CD8-positive, alpha-beta T cell (primary cell): ENCODE measurements at regions of chr2 and their contacts with region 1.

Region 1: DNA sequence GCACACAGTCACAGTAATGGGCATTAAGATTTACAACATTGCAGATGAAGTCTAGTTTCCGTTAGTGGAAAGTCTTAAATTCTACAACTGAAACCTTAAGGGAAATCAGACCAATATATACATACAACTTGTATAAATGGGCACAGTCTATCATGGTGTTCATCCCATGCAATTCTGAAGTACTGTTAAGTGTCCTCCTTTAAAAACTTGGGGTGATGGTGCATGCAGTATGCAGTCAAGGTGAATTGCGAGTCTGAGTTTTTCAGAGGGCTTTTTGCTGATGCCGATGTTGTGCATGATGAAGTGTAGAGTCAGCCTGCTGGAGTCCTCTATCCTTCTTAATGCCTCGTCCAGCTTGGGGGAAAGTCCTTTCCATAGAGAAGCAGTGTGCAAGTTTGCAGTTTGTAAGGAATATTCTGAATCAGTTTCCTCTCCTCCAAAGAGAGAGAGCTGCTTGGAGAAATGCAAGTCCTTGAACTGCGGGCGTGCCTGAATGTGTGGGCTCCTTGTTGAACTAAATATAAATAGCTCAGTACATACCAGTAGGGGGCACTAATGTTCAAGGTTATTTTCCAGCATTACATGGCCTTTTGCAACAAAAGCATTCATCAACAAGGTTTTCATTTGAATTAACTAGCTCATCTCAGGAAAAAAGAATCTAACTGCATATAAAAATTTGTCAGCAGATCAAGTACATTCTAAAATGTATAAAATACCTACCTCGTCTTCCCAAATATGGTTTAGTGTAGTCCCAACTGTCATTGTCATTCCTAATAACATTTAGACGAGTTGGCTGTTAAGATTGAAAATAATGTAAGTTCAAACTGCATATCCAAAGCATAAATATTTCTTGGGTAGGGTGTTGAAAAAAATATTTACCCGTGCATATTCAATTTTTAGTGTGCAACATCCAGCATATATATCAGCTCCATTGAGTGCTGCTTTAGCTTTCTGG is 21.3 kb downstream of the HNRNPLL start:
- DNase-seq: peak in 6 of 9 experiments; percentile 33 to 85 (median 63)
- ATAC-seq: peak; percentile 93
- H3K4me3 ChIP-seq: no peak overlapping the region
- H3K4me3 Mint-ChIP-seq: no peak overlapping the region
- H3K27ac ChIP-seq: no peak overlapping the region
- H3K27ac Mint-ChIP-seq: no peak overlapping the region
- H3K4me1 ChIP-seq: no peaks in the 10 kb centered on the region
- H3K4me1 Mint-ChIP-seq: peaks cover 6% of the 10 kb centered on the region
- H3K27me3 ChIP-seq: no peaks in the 10 kb centered on the region
- H3K27me3 Mint-ChIP-seq: no peaks in the 10 kb centered on the region
- CTCF ChIP-seq: peak; percentile 68

Region 2: GRCh38 chr2:38610851-38611801 is 29.7 kb after region 1 on chr2:
- CTCF ChIA-PET with region 1: interaction called, 82 read pairs
- POLR2A ChIA-PET with region 1: no interaction called
- intact Hi-C with region 1: no loop called
- DNase-seq: peak in 2 of 9 experiments; percentile 32 to 48
- ATAC-seq: no peak
- H3K4me3 ChIP-seq: no peak overlapping the region
- H3K4me3 Mint-ChIP-seq: no peak overlapping the region
- H3K27ac ChIP-seq: no peak overlapping the region
- H3K27ac Mint-ChIP-seq: no peak overlapping the region
- H3K4me1 ChIP-seq: no peaks in the 10 kb centered on the region
- H3K4me1 Mint-ChIP-seq: peaks cover 21% of the 10 kb centered on the region
- H3K27me3 ChIP-seq: no peaks in the 10 kb centered on the region
- H3K27me3 Mint-ChIP-seq: peaks cover under 1% of the 10 kb centered on the region
- CTCF ChIP-seq: no peak

Region 3: GRCh38 chr2:38682008-38682575 is 100.6 kb after region 1 on chr2:
- CTCF ChIA-PET with region 1: interaction called, 18 read pairs
- POLR2A ChIA-PET with region 1: no interaction called
- intact Hi-C with region 1: no loop called
- DNase-seq: peak in 2 of 9 experiments; percentile 62 to 72
- ATAC-seq: peak; percentile 80
- H3K4me3 ChIP-seq: no peak overlapping the region
- H3K4me3 Mint-ChIP-seq: peak overlapping the region; percentile 42
- H3K27ac ChIP-seq: peak overlapping the region in 1 of 2 experiments; percentile 76
- H3K27ac Mint-ChIP-seq: peak overlapping the region; percentile 87
- H3K4me1 ChIP-seq: peaks cover 4% of the 10 kb centered on the region
- H3K4me1 Mint-ChIP-seq: peaks cover 26% of the 10 kb centered on the region
- H3K27me3 ChIP-seq: no peaks in the 10 kb centered on the region
- H3K27me3 Mint-ChIP-seq: no peaks in the 10 kb centered on the region
- CTCF ChIP-seq: no peak

Region 4: DNA sequence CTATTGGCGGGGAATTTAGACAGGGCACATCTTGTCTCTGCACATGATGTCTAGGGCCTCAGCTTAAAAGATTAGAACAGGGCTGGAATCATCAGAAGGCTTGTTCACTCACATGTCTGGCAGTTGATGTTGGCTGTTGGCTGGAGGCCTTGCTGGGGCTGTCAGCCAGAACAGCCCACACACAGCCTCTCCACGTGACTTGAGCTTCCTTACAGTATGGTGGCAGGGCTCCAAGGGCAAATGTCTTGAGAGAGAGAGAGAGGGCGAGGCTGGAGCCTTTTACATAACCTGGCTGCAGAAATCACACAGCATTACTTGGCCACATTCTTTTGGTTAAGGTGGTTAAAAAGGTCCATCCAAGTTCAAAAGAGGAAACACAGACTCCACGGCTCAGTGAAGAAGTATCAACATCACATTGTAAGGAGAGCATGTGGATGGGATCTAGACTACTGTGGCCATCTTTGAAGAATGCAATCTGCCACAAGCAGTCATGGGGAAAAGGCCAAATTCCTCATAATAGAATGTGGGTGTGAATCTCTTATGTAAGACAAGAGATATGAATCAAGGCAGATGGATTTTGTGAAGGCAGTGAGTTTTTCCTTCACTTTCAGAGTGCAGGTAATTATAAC is 139.3 kb after region 1 on chr2:
- CTCF ChIA-PET with region 1: interaction called, 155 read pairs
- POLR2A ChIA-PET with region 1: interaction called, 4 read pairs
- intact Hi-C with region 1: no loop called
- DNase-seq: no peak
- ATAC-seq: no peak
- H3K4me3 ChIP-seq: no peak overlapping the region
- H3K4me3 Mint-ChIP-seq: no peak overlapping the region
- H3K27ac ChIP-seq: no peak overlapping the region
- H3K27ac Mint-ChIP-seq: peak overlapping the region; percentile 25
- H3K4me1 ChIP-seq: peaks cover 13% of the 10 kb centered on the region
- H3K4me1 Mint-ChIP-seq: peaks cover 30% of the 10 kb centered on the region
- H3K27me3 ChIP-seq: no peaks in the 10 kb centered on the region
- H3K27me3 Mint-ChIP-seq: no peaks in the 10 kb centered on the region
- CTCF ChIP-seq: no peak

Region 5: GRCh38 chr2:38740851-38741731 is 159.6 kb after region 1 on chr2:
- CTCF ChIA-PET with region 1: interaction called, 99 read pairs
- POLR2A ChIA-PET with region 1: interaction called, 3 read pairs
- intact Hi-C with region 1: loop called (anchors 1 kb)
- DNase-seq: peak in 3 of 9 experiments; percentile 48 to 73 (median 62)
- ATAC-seq: peak; percentile 22
- H3K4me3 ChIP-seq: no peak overlapping the region
- H3K4me3 Mint-ChIP-seq: no peak overlapping the region
- H3K27ac ChIP-seq: peak overlapping the region in 1 of 2 experiments; percentile 21
- H3K27ac Mint-ChIP-seq: peak overlapping the region; percentile 69
- H3K4me1 ChIP-seq: peaks cover 19% of the 10 kb centered on the region
- H3K4me1 Mint-ChIP-seq: peaks cover 43% of the 10 kb centered on the region
- H3K27me3 ChIP-seq: no peaks in the 10 kb centered on the region
- H3K27me3 Mint-ChIP-seq: no peaks in the 10 kb centered on the region
- CTCF ChIP-seq: peak; percentile 72

Region 6: GRCh38 chr2:39492095-39492590 is 910.7 kb after region 1 on chr2:
- CTCF ChIA-PET with region 1: no interaction called
- POLR2A ChIA-PET with region 1: no interaction called
- intact Hi-C with region 1: no loop called
- DNase-seq: peak in 1 of 9 experiments; percentile 43
- ATAC-seq: no peak
- H3K4me3 ChIP-seq: no peak overlapping the region
- H3K4me3 Mint-ChIP-seq: no peak overlapping the region
- H3K27ac ChIP-seq: no peak overlapping the region
- H3K27ac Mint-ChIP-seq: no peak overlapping the region
- H3K4me1 ChIP-seq: no peaks in the 10 kb centered on the region
- H3K4me1 Mint-ChIP-seq: no peaks in the 10 kb centered on the region
- H3K27me3 ChIP-seq: no peaks in the 10 kb centered on the region
- H3K27me3 Mint-ChIP-seq: no peaks in the 10 kb centered on the region
- CTCF ChIP-seq: no peak